ENCODE measurements at regions of chr5 and their contacts with region 1.

Region 1: GRCh38 chr5:140647042-140647341 is 438 bp downstream of the NDUFA2 start:
- DNase-seq: no peak
- ATAC-seq: peak; percentile 31; the same call in 2 of the 3 replicates
- H3K4me3 ChIP-seq: peak overlapping the region; percentile 82 to 98 (median 95)
- H3K27ac ChIP-seq: peak overlapping the region; percentile 69
- H3K4me1 ChIP-seq: peaks cover 32% of the 10 kb centered on the region
- H3K27me3 ChIP-seq: no peaks in the 10 kb centered on the region; a peak in 2 of 5 replicates
- CTCF ChIP-seq: no peak
- EP300 ChIP-seq: no peak
- POLR2A ChIP-seq: no peak
- RAD21 ChIP-seq: no peak

Region 2: GRCh38 chr5:140547508-140548299 is 99.3 kb before region 1 on chr5 and contains the start of gene EIF4EBP3:
- CTCF ChIA-PET with region 1: no interaction called
- POLR2A ChIA-PET with region 1: interaction called, 34 read pairs
- in situ Hi-C with region 1: no loop called
- intact Hi-C with region 1: no loop called
- DNase-seq: peak; percentile 94
- ATAC-seq: peak; percentile 94
- H3K4me3 ChIP-seq: peak within 1 kb of the TSS; percentile 21 to 69 (median 48); a peak in 5 of 6 replicates
- H3K27ac ChIP-seq: peak within 1 kb of the TSS; percentile 86
- H3K4me1 ChIP-seq: peaks cover 27% of the 10 kb centered on the region
- H3K27me3 ChIP-seq: no peaks in the 10 kb centered on the region
- CTCF ChIP-seq: peak; percentile 62
- EP300 ChIP-seq: no peak
- POLR2A ChIP-seq: peak; percentile 3 to 58
- RAD21 ChIP-seq: peak; percentile 73
- total RNA-seq, gene EIF4EBP3: 1.7 and 1.9 TPM in 2 replicates

Region 3: GRCh38 chr5:140564196-140565023 is 82.6 kb before region 1 on chr5 and contains the starts of genes APBB3 and SLC35A4:
- CTCF ChIA-PET with region 1: no interaction called
- POLR2A ChIA-PET with region 1: interaction called, 11 read pairs
- in situ Hi-C with region 1: no loop called
- intact Hi-C with region 1: no loop called
- DNase-seq: peak; percentile 27
- ATAC-seq: peak; percentile 88
- H3K4me3 ChIP-seq: peak within 1 kb of the TSS; percentile 43 to 70 (median 46)
- H3K27ac ChIP-seq: no peak within 1 kb of the TSS
- H3K4me1 ChIP-seq: peaks cover 18% of the 10 kb centered on the region
- H3K27me3 ChIP-seq: peaks cover 0 to 5% of the 10 kb centered on the region in 2 experiments; a peak in 1 of 5 replicates
- CTCF ChIP-seq: peak; percentile 22; the same call in 1 of the 2 replicates
- EP300 ChIP-seq: no peak
- POLR2A ChIP-seq: 0 out of 4 replicates have a peak, but pooled peaks have one; percentile 11 to 24
- RAD21 ChIP-seq: no peak
- total RNA-seq, gene APBB3: 0.22 and 0.38 TPM in 2 replicates
- total RNA-seq, gene SLC35A4: 0.71 and 0.95 TPM in 2 replicates

Region 4: DNA sequence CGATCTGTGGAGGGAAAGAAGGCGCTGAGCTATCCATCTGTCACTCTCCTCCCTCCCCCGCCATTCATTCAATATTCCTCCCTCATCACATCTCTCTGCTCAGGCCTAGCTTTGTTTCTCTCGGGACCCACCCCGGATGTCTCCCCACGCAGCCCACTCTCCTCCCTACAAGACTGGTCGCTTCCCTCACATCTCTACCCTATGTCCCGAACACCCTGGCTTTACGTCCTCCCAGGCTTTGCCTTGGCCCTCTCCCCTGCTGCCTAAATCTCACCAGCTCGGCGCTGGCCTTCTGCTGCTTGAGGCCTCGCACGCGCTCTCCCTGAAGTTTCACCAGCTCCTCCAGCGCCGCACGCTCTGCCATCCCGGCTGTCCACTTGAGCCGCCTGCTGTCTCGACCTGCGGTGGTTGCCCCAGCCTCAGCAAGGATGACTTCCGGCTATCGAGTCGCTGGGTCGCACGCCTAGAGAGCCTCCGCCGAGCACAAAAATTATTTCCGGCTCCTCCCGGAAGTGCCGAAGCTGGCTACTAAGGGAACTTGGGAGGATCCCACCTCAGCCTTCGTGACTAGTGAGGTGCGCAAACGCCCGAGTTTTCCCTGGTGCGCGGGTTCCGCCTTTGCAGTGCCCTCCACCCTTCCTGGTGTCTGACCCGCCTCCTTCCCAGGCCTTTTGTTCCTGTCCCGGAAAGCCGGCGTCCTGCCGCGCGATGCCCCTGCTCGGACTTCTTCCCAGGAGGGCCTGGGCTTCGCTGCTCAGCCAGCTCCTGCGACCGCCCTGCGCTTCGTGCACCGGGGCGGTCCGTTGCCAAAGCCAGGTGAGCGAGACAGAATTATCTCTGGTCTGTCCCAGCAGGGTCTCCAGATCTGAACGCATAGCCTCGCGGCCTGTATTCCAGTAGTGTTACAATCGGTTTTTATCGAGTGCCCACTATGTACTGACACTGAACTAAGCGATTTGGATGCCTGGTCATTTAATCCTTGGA is 44.2 kb after region 1 on chr5 and contains the starts of genes HARS1 and HARS2:
- CTCF ChIA-PET with region 1: no interaction called
- POLR2A ChIA-PET with region 1: interaction called, 35 read pairs
- in situ Hi-C with region 1: no loop called
- intact Hi-C with region 1: loop called (anchors 2 kb)
- DNase-seq: peak; percentile 94
- ATAC-seq: peak; percentile 98
- H3K4me3 ChIP-seq: peak within 1 kb of the TSS; percentile 82 to 98 (median 87)
- H3K27ac ChIP-seq: peak within 1 kb of the TSS; percentile 84
- H3K4me1 ChIP-seq: peaks cover 28% of the 10 kb centered on the region
- H3K27me3 ChIP-seq: no peaks in the 10 kb centered on the region; a peak in 1 of 5 replicates
- CTCF ChIP-seq: peak; percentile 47
- EP300 ChIP-seq: peak in 1 of 2 experiments; percentile 34; a peak in 1 of 4 replicates
- POLR2A ChIP-seq: peak; percentile 82 to 96
- RAD21 ChIP-seq: no peak
- total RNA-seq, gene HARS1: 66.2 and 78.8 TPM in 2 replicates
- total RNA-seq, gene HARS2: 25.8 and 28.3 TPM in 2 replicates

Region 5: GRCh38 chr5:140710899-140711552 is 64.0 kb after region 1 on chr5:
- CTCF ChIA-PET with region 1: no interaction called
- POLR2A ChIA-PET with region 1: interaction called, 26 read pairs
- in situ Hi-C with region 1: no loop called
- intact Hi-C with region 1: no loop called
- DNase-seq: peak; percentile 98
- ATAC-seq: peak; percentile 94
- H3K4me3 ChIP-seq: peak overlapping the region; percentile 59 to 86 (median 77)
- H3K27ac ChIP-seq: peak overlapping the region; percentile 92
- H3K4me1 ChIP-seq: peaks cover 24% of the 10 kb centered on the region
- H3K27me3 ChIP-seq: no peaks in the 10 kb centered on the region; a peak in 1 of 5 replicates
- CTCF ChIP-seq: no peak
- EP300 ChIP-seq: peak in 1 of 2 experiments; percentile 47; a peak in 1 of 4 replicates
- POLR2A ChIP-seq: peak; percentile 48 to 82
- RAD21 ChIP-seq: 0 out of 2 replicates have a peak, but pooled peaks have one; percentile 7

Region 6: DNA sequence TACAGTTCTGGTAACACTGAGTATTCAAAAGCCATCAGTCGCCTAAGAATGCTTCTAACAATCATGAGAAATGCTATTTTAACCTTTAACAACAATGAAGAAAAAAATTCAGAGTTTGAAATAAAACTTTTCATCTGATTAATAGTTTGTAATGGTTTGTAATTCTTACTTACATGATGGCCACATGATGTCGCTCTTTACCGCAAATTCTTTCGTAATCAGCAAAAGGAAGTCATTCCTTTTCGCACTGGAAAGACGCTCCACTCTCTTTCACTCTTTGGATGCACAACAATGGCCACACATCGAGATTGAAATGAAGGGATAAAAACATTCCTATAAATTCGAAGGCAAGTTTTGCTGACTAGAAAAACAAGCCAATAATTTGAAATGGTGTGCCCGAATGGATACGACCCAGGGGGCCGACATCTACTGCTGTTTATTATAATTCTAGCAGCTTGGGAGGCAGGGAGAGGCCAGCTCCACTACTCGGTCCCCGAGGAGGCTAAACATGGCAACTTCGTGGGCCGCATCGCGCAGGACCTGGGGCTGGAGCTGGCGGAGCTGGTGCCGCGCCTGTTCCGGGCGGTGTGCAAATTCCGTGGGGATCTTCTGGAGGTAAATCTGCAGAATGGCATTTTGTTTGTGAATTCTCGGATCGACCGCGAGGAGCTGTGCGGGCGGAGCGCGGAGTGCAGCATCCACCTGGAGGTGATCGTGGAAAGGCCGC is 187.2 kb after region 1 on chr5 and contains the start of gene PCDHA7:
- CTCF ChIA-PET with region 1: no interaction called
- POLR2A ChIA-PET with region 1: no interaction called
- in situ Hi-C with region 1: no loop called
- intact Hi-C with region 1: no loop called
- DNase-seq: peak; percentile 32
- ATAC-seq: peak; percentile 54
- H3K4me3 ChIP-seq: peak within 1 kb of the TSS; percentile 62 to 68 (median 68)
- H3K27ac ChIP-seq: no peak within 1 kb of the TSS
- H3K4me1 ChIP-seq: no peaks in the 10 kb centered on the region
- H3K27me3 ChIP-seq: no peaks in the 10 kb centered on the region
- CTCF ChIP-seq: peak; percentile 54
- EP300 ChIP-seq: no peak
- POLR2A ChIP-seq: no peak
- RAD21 ChIP-seq: no peak
- total RNA-seq, gene PCDHA7: 0.28 and 0.53 TPM in 2 replicates

Region 7: GRCh38 chr5:140926443-140927227 is 279.6 kb after region 1 on chr5:
- CTCF ChIA-PET with region 1: no interaction called
- POLR2A ChIA-PET with region 1: no interaction called
- in situ Hi-C with region 1: no loop called
- intact Hi-C with region 1: no loop called
- DNase-seq: no peak
- ATAC-seq: no peak
- H3K4me3 ChIP-seq: no peak overlapping the region
- H3K27ac ChIP-seq: no peak overlapping the region
- H3K4me1 ChIP-seq: no peaks in the 10 kb centered on the region
- H3K27me3 ChIP-seq: peaks cover 2 to 17% of the 10 kb centered on the region in 2 experiments; a peak in 3 of 5 replicates
- CTCF ChIP-seq: no peak
- EP300 ChIP-seq: no peak
- POLR2A ChIP-seq: no peak
- RAD21 ChIP-seq: no peak

Measured in HepG2 (cell line).